B cell (primary cell): ENCODE measurements at regions of chr13 and their contacts with region 1.

Region 1: GRCh38 chr13:80399340-80400163 is 58.6 kb upstream of the SPRY2 start:
- DNase-seq: peak; percentile 43
- ATAC-seq: peak; percentile 50
- H3K4me3 ChIP-seq: peak overlapping the region in 1 of 5 experiments; percentile 25
- H3K4me3 Mint-ChIP-seq: peak overlapping the region; percentile 76
- H3K27ac ChIP-seq: peak overlapping the region; percentile 14 to 56
- H3K27ac Mint-ChIP-seq: peak overlapping the region; percentile 84
- H3K4me1 ChIP-seq: peaks cover 24 to 31% of the 10 kb centered on the region in 2 donors
- H3K4me1 Mint-ChIP-seq: peaks cover 52% of the 10 kb centered on the region
- H3K27me3 ChIP-seq: no peaks in the 10 kb centered on the region
- H3K27me3 Mint-ChIP-seq: no peaks in the 10 kb centered on the region
- CTCF ChIP-seq: no peak

Region 2: DNA sequence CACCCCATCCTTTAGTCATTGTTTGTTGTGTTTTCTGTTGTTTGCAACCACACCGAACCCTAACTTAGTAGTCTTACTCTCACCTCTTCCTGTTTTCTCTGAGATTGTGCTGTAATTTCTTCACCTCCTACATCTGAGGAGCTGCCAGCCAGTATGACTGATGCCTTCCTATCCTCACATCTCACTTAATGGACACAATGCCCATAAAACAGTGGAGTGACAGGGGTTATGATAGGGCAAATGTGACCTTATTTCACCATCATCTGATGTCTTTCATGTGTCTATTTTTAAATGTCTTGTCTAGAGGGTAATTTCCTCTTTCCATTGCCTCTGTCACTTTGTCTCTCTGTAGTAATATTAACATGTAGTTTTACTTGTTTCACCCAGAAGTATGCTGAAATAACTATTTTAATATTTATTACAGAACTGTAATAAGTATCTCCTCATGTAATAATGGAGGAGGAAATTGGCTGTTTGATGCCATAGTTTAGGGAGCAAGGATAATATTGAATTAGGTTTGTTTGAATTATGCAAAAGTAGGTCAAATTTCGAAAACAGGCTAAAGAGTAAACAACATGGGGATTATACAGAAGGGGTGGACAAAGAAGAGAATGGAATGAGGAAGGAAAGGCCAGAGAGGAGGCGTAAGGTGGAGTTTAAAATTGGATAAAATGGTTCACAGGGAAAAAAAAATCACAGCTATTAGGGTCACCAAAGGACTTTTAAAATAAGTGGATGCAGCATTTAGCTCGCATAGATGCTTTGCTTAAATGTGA is 44.9 kb after region 1 on chr13:
- CTCF ChIA-PET with region 1: no interaction called
- POLR2A ChIA-PET with region 1: no interaction called
- intact Hi-C with region 1: loop called (anchors 5 kb)
- DNase-seq: peak; percentile 37
- ATAC-seq: peak; percentile 53
- H3K4me3 ChIP-seq: no peak overlapping the region
- H3K4me3 Mint-ChIP-seq: peak overlapping the region; percentile 59
- H3K27ac ChIP-seq: peak overlapping the region in 1 of 2 donors; percentile 43
- H3K27ac Mint-ChIP-seq: peak overlapping the region; percentile 50
- H3K4me1 ChIP-seq: peaks cover 24 to 44% of the 10 kb centered on the region in 2 donors
- H3K4me1 Mint-ChIP-seq: peaks cover 51% of the 10 kb centered on the region
- H3K27me3 ChIP-seq: no peaks in the 10 kb centered on the region
- H3K27me3 Mint-ChIP-seq: no peaks in the 10 kb centered on the region
- CTCF ChIP-seq: no peak

Region 3: DNA sequence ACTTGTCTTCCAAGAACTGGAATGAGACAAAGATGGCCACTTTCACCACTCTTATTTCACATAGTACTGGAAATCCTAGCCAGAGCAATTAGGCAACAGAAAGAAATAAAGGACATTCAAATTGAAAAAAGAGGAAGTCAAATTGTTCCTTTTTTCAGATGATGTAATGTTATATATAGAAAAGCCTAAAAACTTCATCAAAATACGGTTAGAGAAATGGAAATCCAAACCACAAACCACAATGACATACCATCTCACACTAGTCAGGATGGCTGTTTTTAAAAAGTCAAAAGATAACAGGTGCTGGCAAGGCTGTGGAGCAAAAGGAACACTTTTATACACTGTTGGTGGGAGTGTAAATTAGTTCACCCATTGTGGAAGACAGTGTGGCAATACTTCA is 54.7 kb after region 1 on chr13:
- CTCF ChIA-PET with region 1: no interaction called
- POLR2A ChIA-PET with region 1: no interaction called
- intact Hi-C with region 1: loop called (anchors 2 kb)
- DNase-seq: peak; percentile 81
- ATAC-seq: peak; percentile 89
- H3K4me3 ChIP-seq: peak overlapping the region in 1 of 5 experiments; percentile 16
- H3K4me3 Mint-ChIP-seq: peak overlapping the region; percentile 57
- H3K27ac ChIP-seq: peak overlapping the region; percentile 15 to 27
- H3K27ac Mint-ChIP-seq: peak overlapping the region; percentile 82
- H3K4me1 ChIP-seq: peaks cover 35 to 36% of the 10 kb centered on the region in 2 donors
- H3K4me1 Mint-ChIP-seq: peaks cover 55% of the 10 kb centered on the region
- H3K27me3 ChIP-seq: no peaks in the 10 kb centered on the region
- H3K27me3 Mint-ChIP-seq: no peaks in the 10 kb centered on the region
- CTCF ChIP-seq: no peak

Region 4: DNA sequence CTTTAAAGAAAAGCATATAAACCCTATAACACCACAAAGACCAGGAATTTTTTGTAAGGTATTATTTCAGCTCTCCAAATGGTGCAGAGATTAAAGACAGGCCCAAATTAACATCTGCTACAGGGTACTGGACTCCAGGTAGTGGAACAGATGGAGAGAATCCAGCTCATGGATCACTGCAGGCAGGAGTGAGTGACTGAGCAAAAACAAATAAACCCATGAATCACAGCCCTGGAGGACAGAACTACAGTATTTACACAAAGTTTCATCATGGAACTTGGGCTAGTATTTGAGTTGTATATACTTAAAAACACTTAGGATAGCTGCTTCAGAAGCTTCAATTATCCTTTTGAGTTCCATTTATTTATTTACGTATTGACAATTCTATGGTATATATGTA is 74.1 kb after region 1 on chr13:
- CTCF ChIA-PET with region 1: no interaction called
- POLR2A ChIA-PET with region 1: no interaction called
- intact Hi-C with region 1: no loop called
- DNase-seq: no peak
- ATAC-seq: no peak
- H3K4me3 ChIP-seq: no peak overlapping the region
- H3K4me3 Mint-ChIP-seq: no peak overlapping the region
- H3K27ac ChIP-seq: no peak overlapping the region
- H3K27ac Mint-ChIP-seq: no peak overlapping the region
- H3K4me1 ChIP-seq: no peaks in the 10 kb centered on the region
- H3K4me1 Mint-ChIP-seq: peaks cover 5% of the 10 kb centered on the region
- H3K27me3 ChIP-seq: no peaks in the 10 kb centered on the region
- H3K27me3 Mint-ChIP-seq: no peaks in the 10 kb centered on the region
- CTCF ChIP-seq: no peak

Region 5: DNA sequence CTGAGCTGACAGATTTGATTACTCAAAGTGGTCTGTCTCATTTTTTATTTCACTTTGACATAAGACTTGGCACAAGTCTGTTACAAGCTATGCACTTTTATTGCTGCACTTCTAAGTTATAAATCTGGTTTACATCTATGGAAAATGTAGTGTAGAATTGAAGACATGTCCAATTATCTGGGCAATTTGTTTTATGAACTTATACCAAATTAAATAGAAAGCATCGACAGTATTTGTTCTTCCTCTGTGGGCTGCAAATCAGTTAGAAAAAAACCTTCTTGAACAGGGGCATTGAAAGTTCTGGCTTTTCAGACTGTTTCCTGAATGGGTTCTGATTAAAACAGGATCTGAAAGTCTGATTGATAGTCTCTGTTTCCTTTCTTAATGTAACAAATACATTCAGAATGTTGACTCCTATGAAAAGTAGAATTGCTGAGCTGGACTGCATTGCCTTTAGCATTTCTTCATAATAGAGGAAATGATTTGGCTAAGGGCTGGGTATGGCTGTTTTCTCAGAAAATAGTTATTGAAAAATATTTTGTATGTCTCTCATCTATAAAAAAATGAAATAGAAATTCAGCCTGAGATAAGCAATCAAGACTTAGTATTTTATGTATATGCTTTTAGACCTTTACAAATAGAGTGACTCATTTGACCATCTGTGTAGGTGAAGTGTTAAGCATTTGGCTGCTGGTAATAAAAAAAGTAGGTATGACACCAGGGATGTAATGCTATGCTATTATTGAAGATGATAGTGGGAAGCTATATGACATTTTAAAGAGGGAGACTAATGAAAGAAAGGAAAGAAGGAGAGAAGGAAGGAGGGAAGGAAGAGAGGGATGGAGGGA is 152.3 kb after region 1 on chr13:
- CTCF ChIA-PET with region 1: no interaction called
- POLR2A ChIA-PET with region 1: no interaction called
- intact Hi-C with region 1: loop called (anchors 10 kb)
- DNase-seq: peak; percentile 42
- ATAC-seq: peak; percentile 45
- H3K4me3 ChIP-seq: peak overlapping the region in 1 of 5 experiments; percentile 21
- H3K4me3 Mint-ChIP-seq: peak overlapping the region; percentile 21
- H3K27ac ChIP-seq: no peak overlapping the region
- H3K27ac Mint-ChIP-seq: no peak overlapping the region
- H3K4me1 ChIP-seq: peaks cover 0 to 14% of the 10 kb centered on the region in 2 donors
- H3K4me1 Mint-ChIP-seq: peaks cover 13% of the 10 kb centered on the region
- H3K27me3 ChIP-seq: peaks cover 0 to 6% (median 0%) of the 10 kb centered on the region in 4 experiments
- H3K27me3 Mint-ChIP-seq: no peaks in the 10 kb centered on the region
- CTCF ChIP-seq: no peak